ENCODE measurements at regions of chr14 and their contacts with region 1.

Region 1: DNA sequence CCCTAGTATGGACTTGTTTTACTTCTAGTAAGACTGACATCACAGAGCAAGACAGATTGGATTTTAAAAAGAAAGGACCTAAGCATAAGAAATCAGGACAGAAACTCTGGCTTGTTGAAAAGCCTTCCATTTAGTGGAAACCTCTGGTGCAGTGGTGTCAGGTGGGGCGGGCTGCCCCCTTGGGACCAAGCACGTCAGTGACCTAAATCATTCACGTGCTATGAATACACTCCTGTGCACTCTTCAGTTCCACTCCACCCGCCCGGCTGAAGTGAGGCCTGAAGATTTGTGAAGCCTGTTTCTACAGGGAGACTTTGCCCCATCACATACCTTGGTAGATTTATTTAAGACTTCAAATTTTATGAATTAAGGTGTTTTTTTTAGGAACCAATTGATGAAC is 58.2 kb upstream of the STRN3 start:
- DNase-seq: no peak
- ATAC-seq: no peak
- H3K4me3 ChIP-seq: no peak overlapping the region
- H3K27ac ChIP-seq: no peak overlapping the region
- H3K4me1 ChIP-seq: no peaks in the 10 kb centered on the region
- H3K27me3 ChIP-seq: no peaks in the 10 kb centered on the region

Region 2: GRCh38 chr14:30906752-30907658 is 177.4 kb before region 1 on chr14:
- intact Hi-C with region 1: no loop called
- DNase-seq: no peak
- ATAC-seq: no peak
- H3K4me3 ChIP-seq: no peak overlapping the region
- H3K27ac ChIP-seq: no peak overlapping the region
- H3K4me1 ChIP-seq: no peaks in the 10 kb centered on the region
- H3K27me3 ChIP-seq: no peaks in the 10 kb centered on the region

Region 3: GRCh38 chr14:30974628-30975027 is 109.8 kb before region 1 on chr14:
- intact Hi-C with region 1: loop called in 1 of 4 experiments (anchors 5 kb)
- DNase-seq: no peak
- ATAC-seq: peak in 1 of 2 donors; percentile 63
- H3K4me3 ChIP-seq: no peak overlapping the region
- H3K27ac ChIP-seq: no peak overlapping the region
- H3K4me1 ChIP-seq: peaks cover 4% of the 10 kb centered on the region
- H3K27me3 ChIP-seq: no peaks in the 10 kb centered on the region

Region 4: DNA sequence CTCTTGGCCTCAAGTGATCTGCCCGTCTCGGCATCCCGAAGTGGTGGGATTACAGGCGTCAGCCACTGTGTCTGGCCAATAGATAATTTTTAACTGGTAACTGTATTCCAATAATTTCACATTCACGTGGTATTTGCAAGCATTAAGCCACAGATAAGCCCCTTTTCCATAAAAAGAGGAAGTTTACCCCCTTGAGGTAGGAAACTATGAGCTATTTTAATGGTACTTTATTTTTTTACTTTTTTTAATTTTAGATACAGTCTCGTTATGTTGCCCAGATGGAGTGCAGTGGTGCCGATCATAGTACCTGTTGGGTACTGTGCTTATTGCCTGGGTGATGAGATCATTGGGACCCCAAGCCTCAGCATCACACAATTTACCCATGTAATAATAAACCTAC is 101.9 kb before region 1 on chr14:
- intact Hi-C with region 1: loop called (anchors 2 to 5 kb)
- DNase-seq: no peak
- ATAC-seq: no peak
- H3K4me3 ChIP-seq: no peak overlapping the region
- H3K27ac ChIP-seq: no peak overlapping the region
- H3K4me1 ChIP-seq: no peaks in the 10 kb centered on the region
- H3K27me3 ChIP-seq: no peaks in the 10 kb centered on the region

Measured in right cardiac atrium (tissue), 5 donors.